ENCODE measurements at regions of chr9 and their contacts with region 1.

Region 1: GRCh38 chr9:101533334-101534107 is at the start of gene RNF20:
- DNase-seq: peak; percentile 99 to 100 (median 99)
- H3K4me3 ChIP-seq: peak within 1 kb of the TSS; percentile 99
- H3K4me3 Mint-ChIP-seq: peak within 1 kb of the TSS; percentile 92 to 99 (median 93)
- H3K27ac ChIP-seq: peak within 1 kb of the TSS; percentile 99
- H3K27ac Mint-ChIP-seq: peak within 1 kb of the TSS; percentile 98 to 100 (median 99)
- H3K4me1 ChIP-seq: peaks cover 41% of the 10 kb centered on the region
- H3K4me1 Mint-ChIP-seq: peaks cover 0 to 27% (median 19%) of the 10 kb centered on the region in 3 donors
- H3K27me3 ChIP-seq: no peaks in the 10 kb centered on the region
- H3K27me3 Mint-ChIP-seq: peaks cover 0 to 9% of the 10 kb centered on the region in 2 donors
- total RNA-seq, gene RNF20: 46.8 to 53.5 TPM

Region 2: DNA sequence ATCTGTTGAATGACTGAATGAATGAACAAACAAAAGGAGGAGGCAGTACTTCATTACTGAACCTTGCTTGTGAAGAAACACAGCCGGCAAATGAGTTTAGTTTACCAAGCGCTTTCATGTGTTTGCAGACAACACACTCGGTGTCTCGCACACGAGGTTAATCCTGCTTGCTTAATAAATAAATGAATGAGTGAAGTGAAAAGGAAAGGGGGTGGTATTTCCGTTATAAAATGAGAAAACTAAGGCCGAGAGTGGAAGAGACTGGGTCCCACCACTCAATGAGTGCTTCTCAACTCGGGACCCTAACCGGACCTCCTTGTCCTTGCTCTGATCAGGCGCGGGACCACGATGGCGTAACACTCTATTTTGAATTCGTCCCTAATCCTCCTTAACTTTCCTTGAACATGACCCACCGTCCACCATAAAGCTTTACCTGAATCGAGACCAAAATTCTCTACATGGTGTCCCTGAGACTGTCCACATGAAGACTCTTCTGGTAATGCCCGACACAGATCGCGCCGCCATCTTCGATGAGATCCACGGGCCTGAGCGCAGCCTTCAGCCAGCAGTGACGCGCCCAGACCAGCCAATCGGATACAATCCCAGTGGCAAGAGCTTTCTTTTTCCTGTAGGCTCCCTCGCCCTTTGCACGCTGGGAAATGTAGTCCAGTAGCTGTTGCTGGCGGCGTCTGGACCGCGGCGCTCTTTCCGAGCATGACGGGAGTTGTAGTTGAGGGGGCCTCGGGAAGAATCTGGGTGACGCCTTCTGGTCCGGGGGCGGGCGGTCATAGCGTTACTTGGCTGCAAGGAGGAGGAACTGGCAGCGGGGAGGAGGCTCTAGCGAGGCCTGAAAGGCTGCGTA is 135.2 kb before region 1 on chr9 and contains the starts of genes MRPL50 and ZNF189:
- CTCF ChIA-PET with region 1: interaction called, 6 read pairs
- POLR2A ChIA-PET with region 1: interaction called, 13 read pairs
- DNase-seq: peak; percentile 93 to 98 (median 96)
- H3K4me3 ChIP-seq: peak within 1 kb of the TSS; percentile 93
- H3K4me3 Mint-ChIP-seq: peak within 1 kb of the TSS; percentile 96 to 100 (median 98)
- H3K27ac ChIP-seq: peak within 1 kb of the TSS; percentile 98
- H3K27ac Mint-ChIP-seq: peak within 1 kb of the TSS; percentile 97 to 100 (median 100)
- H3K4me1 ChIP-seq: peaks cover 51% of the 10 kb centered on the region
- H3K4me1 Mint-ChIP-seq: peaks cover 76 to 92% (median 90%) of the 10 kb centered on the region in 3 donors
- H3K27me3 ChIP-seq: no peaks in the 10 kb centered on the region
- H3K27me3 Mint-ChIP-seq: no peaks in the 10 kb centered on the region
- total RNA-seq, gene MRPL50: 16.2 to 16.4 TPM
- total RNA-seq, gene ZNF189: 9.7 to 9.9 TPM

Region 3: DNA sequence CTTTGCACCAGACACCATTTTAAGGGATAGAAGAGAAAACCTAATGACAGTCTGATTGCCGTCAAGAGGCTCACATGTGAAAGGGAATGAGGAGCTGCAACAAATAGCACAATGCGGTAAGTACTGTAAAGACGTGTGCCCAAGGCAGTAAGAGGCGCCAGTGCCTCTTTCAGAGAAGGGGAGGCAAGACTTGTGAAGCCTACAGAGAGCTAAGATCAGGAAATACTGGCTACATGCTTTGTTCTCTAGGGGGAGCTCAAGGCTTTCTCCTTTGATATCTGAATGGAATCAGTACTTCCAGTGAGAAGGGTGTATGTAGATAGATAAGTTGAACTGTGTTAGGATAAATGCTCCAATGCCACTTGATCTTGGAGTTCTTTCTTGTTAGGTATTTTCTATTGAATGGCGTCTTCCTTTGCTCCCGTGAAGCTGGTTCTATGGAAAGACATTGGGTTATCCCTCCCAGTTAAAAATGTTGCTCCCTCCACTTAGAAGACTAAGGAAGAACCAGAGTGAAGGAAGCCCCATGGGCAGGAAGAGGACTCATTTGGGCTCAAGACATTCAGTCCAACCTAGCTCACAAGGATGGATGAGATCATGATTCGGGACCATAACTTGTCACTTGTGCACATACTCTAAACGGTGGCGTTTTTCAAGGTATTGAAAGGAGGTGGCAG is 74.4 kb before region 1 on chr9:
- CTCF ChIA-PET with region 1: interaction called, 29 read pairs
- POLR2A ChIA-PET with region 1: no interaction called
- DNase-seq: peak in 2 of 5 donors; percentile 8 to 26
- H3K4me3 ChIP-seq: no peak overlapping the region
- H3K4me3 Mint-ChIP-seq: no peak overlapping the region
- H3K27ac ChIP-seq: no peak overlapping the region
- H3K27ac Mint-ChIP-seq: no peak overlapping the region
- H3K4me1 ChIP-seq: no peaks in the 10 kb centered on the region
- H3K4me1 Mint-ChIP-seq: no peaks in the 10 kb centered on the region
- H3K27me3 ChIP-seq: no peaks in the 10 kb centered on the region
- H3K27me3 Mint-ChIP-seq: peaks cover 8 to 32% of the 10 kb centered on the region in 2 donors

Region 4: GRCh38 chr9:101508211-101508610 is 25.3 kb before region 1 on chr9:
- CTCF ChIA-PET with region 1: no interaction called
- POLR2A ChIA-PET with region 1: no interaction called
- DNase-seq: no peak
- H3K4me3 ChIP-seq: no peak overlapping the region
- H3K4me3 Mint-ChIP-seq: no peak overlapping the region
- H3K27ac ChIP-seq: no peak overlapping the region
- H3K27ac Mint-ChIP-seq: no peak overlapping the region
- H3K4me1 ChIP-seq: no peaks in the 10 kb centered on the region
- H3K4me1 Mint-ChIP-seq: no peaks in the 10 kb centered on the region
- H3K27me3 ChIP-seq: no peaks in the 10 kb centered on the region
- H3K27me3 Mint-ChIP-seq: peaks cover 12 to 30% of the 10 kb centered on the region in 2 donors